ENCODE measurements at regions of chr6 and their contacts with region 1.

Region 1: GRCh38 chr6:148464319-148465010 is 121.8 kb downstream of the SASH1 start:
- DNase-seq: peak; percentile 48 to 77
- ATAC-seq: peak; percentile 67 to 82 (median 76)
- H3K4me3 ChIP-seq: no peak overlapping the region
- H3K27ac ChIP-seq: peak overlapping the region in 7 of 10 donors; percentile 0 to 82 (median 51)
- H3K4me1 ChIP-seq: peaks cover 9 to 78% (median 53%) of the 10 kb centered on the region in 9 donors
- H3K27me3 ChIP-seq: no peaks in the 10 kb centered on the region
- CTCF ChIP-seq: peak; percentile 68 to 99 (median 94)

Region 2: DNA sequence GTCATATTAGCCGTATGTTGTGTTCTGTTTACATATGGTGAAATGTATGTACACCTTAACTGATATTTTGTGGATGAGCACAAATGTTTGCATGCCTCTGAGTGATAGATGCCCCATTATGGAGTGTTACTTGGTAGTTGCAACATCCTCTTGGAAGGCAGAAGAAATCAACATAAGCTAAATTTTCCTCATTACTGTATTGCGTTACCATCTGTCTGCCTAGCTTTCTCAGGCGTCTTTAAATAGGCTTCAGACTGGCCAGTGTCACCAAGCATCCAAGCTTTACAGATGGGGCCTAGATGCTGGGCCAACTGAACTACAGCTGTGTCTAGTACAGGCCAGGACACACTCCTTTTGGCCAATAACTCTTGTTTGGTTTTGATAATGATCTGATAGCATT is 705.4 kb before region 1 on chr6:
- intact Hi-C with region 1: no loop called
- DNase-seq: no peak
- ATAC-seq: peak in 5 of 8 donors; percentile 46 to 67 (median 52)
- H3K4me3 ChIP-seq: no peak overlapping the region
- H3K27ac ChIP-seq: no peak overlapping the region
- H3K4me1 ChIP-seq: no peaks in the 10 kb centered on the region
- H3K27me3 ChIP-seq: no peaks in the 10 kb centered on the region
- CTCF ChIP-seq: no peak

Region 3: DNA sequence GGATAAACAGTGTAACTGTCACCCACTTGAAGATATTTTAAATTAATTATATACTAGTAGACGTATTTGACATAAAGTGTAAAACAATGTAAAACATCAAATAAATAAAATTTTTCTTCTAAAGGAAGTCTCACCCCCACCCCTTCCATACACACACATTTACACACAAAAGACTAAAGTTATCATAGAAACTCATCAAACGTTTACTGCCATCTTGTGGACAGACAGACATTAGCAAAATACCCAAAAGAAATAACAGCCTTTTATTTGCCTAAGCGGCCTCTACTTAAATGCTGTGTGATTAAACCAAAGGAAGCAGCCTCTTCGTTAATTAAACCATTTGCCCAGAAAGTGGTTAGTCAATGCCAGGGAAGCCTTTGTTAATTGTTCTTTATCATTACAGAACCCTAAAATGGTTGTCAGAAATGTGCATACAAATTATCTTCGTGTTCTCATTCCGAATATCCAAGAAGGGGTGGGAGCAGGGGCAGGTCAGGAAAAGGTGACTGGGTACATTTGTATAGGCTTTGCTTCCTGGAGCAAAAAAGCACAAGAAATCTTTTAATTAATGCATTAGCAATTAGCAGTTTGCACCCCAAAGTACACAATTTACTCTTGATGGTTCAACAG is 298.0 kb before region 1 on chr6:
- intact Hi-C with region 1: loop called in 1 of 10 experiments (anchors 5 kb)
- DNase-seq: peak in 1 of 2 donors; percentile 23
- ATAC-seq: no peak
- H3K4me3 ChIP-seq: no peak overlapping the region
- H3K27ac ChIP-seq: no peak overlapping the region
- H3K4me1 ChIP-seq: no peaks in the 10 kb centered on the region
- H3K27me3 ChIP-seq: no peaks in the 10 kb centered on the region
- CTCF ChIP-seq: peak; percentile 10 to 79 (median 72)

Region 4: GRCh38 chr6:148240461-148240840 is 224.0 kb before region 1 on chr6:
- intact Hi-C with region 1: loop called in 1 of 10 experiments (anchors 10 kb)
- DNase-seq: peak; percentile 25 to 43
- ATAC-seq: peak in 7 of 8 donors; percentile 34 to 60 (median 48)
- H3K4me3 ChIP-seq: no peak overlapping the region
- H3K27ac ChIP-seq: peak overlapping the region in 9 of 10 donors; percentile 3 to 79 (median 62)
- H3K4me1 ChIP-seq: peaks cover 3 to 66% (median 35%) of the 10 kb centered on the region in 9 donors
- H3K27me3 ChIP-seq: no peaks in the 10 kb centered on the region
- CTCF ChIP-seq: no peak

Region 5: DNA sequence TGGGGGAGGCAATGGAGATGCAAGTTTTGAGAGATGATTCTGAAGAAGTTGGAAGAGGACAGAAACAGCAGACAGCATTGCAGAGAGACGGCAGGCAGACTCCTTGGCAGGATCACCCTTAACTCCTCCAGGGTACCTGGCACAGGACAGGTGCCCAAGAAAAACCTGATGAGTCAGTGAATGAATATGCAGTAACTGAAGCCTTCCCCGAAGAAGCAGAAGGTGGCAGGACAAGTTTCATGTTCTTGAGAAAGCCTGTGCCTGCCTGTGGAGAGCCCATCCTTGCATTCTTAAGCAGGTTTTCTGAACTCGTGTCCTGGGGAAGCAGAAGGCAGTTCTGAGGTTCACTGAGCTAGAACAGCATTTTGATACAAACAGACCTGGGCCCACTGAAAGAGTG is 201.5 kb before region 1 on chr6:
- intact Hi-C with region 1: loop called in 3 of 10 experiments (anchors 10 kb)
- DNase-seq: no peak
- ATAC-seq: no peak
- H3K4me3 ChIP-seq: no peak overlapping the region
- H3K27ac ChIP-seq: no peak overlapping the region
- H3K4me1 ChIP-seq: peaks cover 0 to 6% (median 0%) of the 10 kb centered on the region in 9 donors
- H3K27me3 ChIP-seq: no peaks in the 10 kb centered on the region
- CTCF ChIP-seq: no peak

Region 6: GRCh38 chr6:148342357-148343046 is 122.0 kb before region 1 on chr6 and contains the start of gene SASH1:
- intact Hi-C with region 1: loop called in 7 of 10 experiments (anchors 2 to 10 kb)
- DNase-seq: peak; percentile 70 to 71
- ATAC-seq: peak; percentile 71 to 91 (median 84)
- H3K4me3 ChIP-seq: peak within 1 kb of the TSS; percentile 68 to 88 (median 76)
- H3K27ac ChIP-seq: peak within 1 kb of the TSS; percentile 86 to 98 (median 92)
- H3K4me1 ChIP-seq: peaks cover 0 to 57% (median 38%) of the 10 kb centered on the region in 9 donors
- H3K27me3 ChIP-seq: peaks cover 0 to 31% (median 0%) of the 10 kb centered on the region in 7 donors
- CTCF ChIP-seq: no peak
- total RNA-seq, gene SASH1: 19.0 to 47.1 (median 27.1) TPM

Region 7: DNA sequence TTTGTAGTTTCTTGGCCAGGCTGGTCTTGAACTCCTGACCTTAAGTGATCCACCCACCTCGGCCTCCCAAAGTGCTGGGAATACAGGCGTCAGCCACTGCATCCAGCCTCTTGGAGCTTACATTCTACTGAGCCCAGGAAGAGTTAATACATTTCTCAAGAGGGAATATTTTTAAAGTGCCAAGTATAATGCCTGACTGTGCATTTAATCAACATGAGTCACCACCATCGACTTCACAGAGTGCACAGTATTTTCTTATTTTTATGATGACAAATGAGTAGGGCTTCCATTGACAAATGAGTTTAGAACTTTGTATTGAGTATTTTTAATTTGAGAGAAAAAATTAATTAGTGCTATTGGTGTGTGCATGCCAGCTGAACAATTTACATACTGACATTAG is 49.6 kb before region 1 on chr6:
- intact Hi-C with region 1: loop called in 1 of 10 experiments (anchors 5 kb)
- DNase-seq: no peak
- ATAC-seq: peak in 6 of 8 donors; percentile 28 to 81 (median 49)
- H3K4me3 ChIP-seq: no peak overlapping the region
- H3K27ac ChIP-seq: no peak overlapping the region
- H3K4me1 ChIP-seq: peaks cover 0 to 56% (median 37%) of the 10 kb centered on the region in 9 donors
- H3K27me3 ChIP-seq: no peaks in the 10 kb centered on the region
- CTCF ChIP-seq: no peak

Region 8: GRCh38 chr6:148648754-148649453 is 184.4 kb after region 1 on chr6:
- intact Hi-C with region 1: no loop called
- DNase-seq: no peak
- ATAC-seq: no peak
- H3K4me3 ChIP-seq: no peak overlapping the region
- H3K27ac ChIP-seq: no peak overlapping the region
- H3K4me1 ChIP-seq: peaks cover 0 to 10% (median 0%) of the 10 kb centered on the region in 9 donors
- H3K27me3 ChIP-seq: no peaks in the 10 kb centered on the region
- CTCF ChIP-seq: no peak